Mammary epithelial cell (primary cell): ENCODE measurements at regions of chr1 and their contacts with region 1.

Region 1: DNA sequence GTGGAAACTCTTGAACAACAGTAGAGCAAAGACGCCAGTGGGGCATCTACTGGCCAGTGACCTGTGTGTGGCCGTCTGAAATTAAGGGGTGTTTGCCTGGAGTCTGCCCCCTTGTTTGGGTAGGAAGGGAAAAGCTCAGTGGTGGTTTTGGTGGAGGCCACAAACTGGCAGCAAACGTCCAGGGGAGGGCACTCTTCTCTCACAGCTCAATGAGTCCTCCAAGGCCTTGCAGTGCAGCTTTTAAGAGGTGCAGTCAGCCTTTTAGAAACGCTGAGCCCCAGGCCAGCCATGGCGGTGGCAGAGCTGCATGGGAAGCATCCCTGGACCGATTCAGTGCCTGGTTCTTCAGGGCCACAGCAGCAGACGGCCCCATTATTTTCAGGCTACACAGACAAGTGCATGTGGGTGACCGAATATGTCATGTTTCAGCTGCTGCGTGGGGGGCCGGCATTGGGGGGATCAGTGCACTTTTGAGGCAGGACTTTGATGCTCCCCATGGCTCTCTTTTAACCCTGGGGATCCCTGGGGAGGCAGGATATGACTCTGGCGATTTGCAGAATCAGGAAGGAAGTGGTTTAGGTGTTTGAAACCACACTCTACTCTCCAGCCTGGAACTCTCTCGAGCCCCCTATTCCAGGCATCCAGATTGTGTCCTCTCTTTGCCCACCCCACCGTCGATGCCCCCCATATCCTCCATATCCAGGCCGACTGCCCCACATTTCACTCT is 414.0 kb downstream of the PRDM2 start:
- DNase-seq: peak; percentile 52
- H3K4me3 ChIP-seq: no peak overlapping the region
- H3K27ac ChIP-seq: no peak overlapping the region
- H3K4me1 ChIP-seq: no peaks in the 10 kb centered on the region
- H3K27me3 ChIP-seq: no peaks in the 10 kb centered on the region
- CTCF ChIP-seq: peak; percentile 63 to 86

Region 2: DNA sequence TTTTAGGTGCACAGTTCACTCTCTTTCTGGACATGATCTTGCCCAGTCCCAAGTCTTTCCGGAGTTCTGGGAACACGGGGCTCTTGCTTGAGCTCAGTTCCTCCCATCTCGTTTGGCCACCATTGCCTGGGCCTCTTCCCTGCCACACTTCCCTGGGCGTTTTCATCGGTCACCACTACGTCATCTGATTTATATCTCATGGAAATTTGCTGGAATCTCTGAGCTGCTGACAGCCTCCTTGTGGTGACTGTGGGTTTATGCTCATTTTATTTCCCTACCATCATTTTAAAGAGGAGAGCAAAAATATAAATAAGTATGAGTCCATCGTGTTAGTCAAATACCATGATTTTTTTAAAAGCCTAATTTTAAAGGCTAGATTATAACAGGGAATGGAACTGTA is 35.4 kb after region 1 on chr1:
- CTCF ChIA-PET with region 1: no interaction called
- dilution Hi-C with region 1: no loop called
- in situ Hi-C with region 1: no loop called
- intact Hi-C with region 1: loop called (anchors 1 kb)
- DNase-seq: no peak
- H3K4me3 ChIP-seq: no peak overlapping the region
- H3K27ac ChIP-seq: no peak overlapping the region
- H3K4me1 ChIP-seq: no peaks in the 10 kb centered on the region
- H3K27me3 ChIP-seq: no peaks in the 10 kb centered on the region
- CTCF ChIP-seq: peak; percentile 23 to 27

Region 3: DNA sequence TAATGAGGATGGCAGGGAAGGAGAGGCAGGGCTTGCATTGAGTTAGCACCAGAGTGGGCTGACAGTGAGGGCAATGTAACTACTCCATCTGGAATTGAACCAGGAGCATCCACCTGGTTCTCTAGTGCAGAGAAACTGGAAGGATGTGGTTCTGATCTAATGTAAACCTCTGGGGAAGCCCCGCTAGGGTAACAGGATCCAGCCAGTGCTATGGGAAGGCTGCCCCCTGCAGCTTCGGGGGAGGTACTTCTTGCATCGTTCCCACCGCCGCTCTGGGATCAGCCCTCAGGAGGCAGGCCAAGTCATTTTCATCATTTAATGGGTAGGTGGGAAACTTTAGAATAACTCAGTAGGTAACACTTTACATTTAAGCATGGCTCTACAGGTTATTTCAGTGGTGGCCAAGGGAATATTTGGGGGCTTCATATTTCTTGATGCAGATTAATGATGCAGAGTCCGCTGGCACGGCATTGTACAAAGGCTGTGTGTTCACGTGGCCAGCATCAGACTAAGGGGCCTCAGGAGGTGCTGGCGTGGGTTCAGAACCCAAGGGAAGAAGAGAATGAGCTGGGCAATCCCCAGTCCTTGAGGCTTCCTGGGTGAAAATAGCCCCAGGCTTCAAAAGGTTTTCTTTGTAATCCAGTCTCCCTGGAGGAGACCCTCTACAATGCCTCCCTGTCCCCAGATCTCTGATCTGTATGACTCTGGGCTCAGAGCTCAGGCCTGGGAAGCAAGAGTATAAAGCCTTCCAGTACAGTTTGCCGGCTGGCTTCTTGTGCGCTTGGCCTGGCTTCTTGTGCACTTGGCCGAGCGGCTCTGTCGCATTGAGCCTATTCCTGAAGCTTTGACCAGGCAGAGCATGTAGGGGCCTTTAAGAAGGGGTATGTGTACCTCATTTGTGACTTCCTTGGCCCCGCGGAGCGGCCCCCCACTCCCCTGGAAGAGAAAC is 458.1 kb after region 1 on chr1:
- CTCF ChIA-PET with region 1: no interaction called
- dilution Hi-C with region 1: no loop called
- in situ Hi-C with region 1: loop called in 1 of 2 experiments (anchors 25 kb)
- intact Hi-C with region 1: no loop called
- DNase-seq: no peak
- H3K4me3 ChIP-seq: no peak overlapping the region
- H3K27ac ChIP-seq: no peak overlapping the region
- H3K4me1 ChIP-seq: no peaks in the 10 kb centered on the region
- H3K27me3 ChIP-seq: no peaks in the 10 kb centered on the region
- CTCF ChIP-seq: no peak

Region 4: GRCh38 chr1:14733048-14733778 is 619.2 kb after region 1 on chr1:
- CTCF ChIA-PET with region 1: no interaction called
- dilution Hi-C with region 1: no loop called
- in situ Hi-C with region 1: no loop called
- intact Hi-C with region 1: loop called (anchors 2 kb)
- DNase-seq: peak; percentile 96
- H3K4me3 ChIP-seq: peak overlapping the region; percentile 1 to 26 (median 9)
- H3K27ac ChIP-seq: peak overlapping the region; percentile 98
- H3K4me1 ChIP-seq: peaks cover 27% of the 10 kb centered on the region
- H3K27me3 ChIP-seq: no peaks in the 10 kb centered on the region
- CTCF ChIP-seq: no peak

Region 5: GRCh38 chr1:14804626-14805025 is 690.6 kb after region 1 on chr1:
- CTCF ChIA-PET with region 1: no interaction called
- dilution Hi-C with region 1: no loop called
- in situ Hi-C with region 1: no loop called
- intact Hi-C with region 1: loop called (anchors 5 kb)
- DNase-seq: no peak
- H3K4me3 ChIP-seq: no peak overlapping the region
- H3K27ac ChIP-seq: no peak overlapping the region
- H3K4me1 ChIP-seq: no peaks in the 10 kb centered on the region
- H3K27me3 ChIP-seq: no peaks in the 10 kb centered on the region
- CTCF ChIP-seq: peak; percentile 35 to 71

Region 6: GRCh38 chr1:14923727-14924452 is 809.9 kb after region 1 on chr1:
- CTCF ChIA-PET with region 1: no interaction called
- dilution Hi-C with region 1: no loop called
- in situ Hi-C with region 1: no loop called
- intact Hi-C with region 1: loop called (anchors 10 kb)
- DNase-seq: peak; percentile 53
- H3K4me3 ChIP-seq: peak overlapping the region in 2 of 3 experiments; percentile 81 to 82
- H3K27ac ChIP-seq: no peak overlapping the region
- H3K4me1 ChIP-seq: peaks cover 22% of the 10 kb centered on the region
- H3K27me3 ChIP-seq: no peaks in the 10 kb centered on the region
- CTCF ChIP-seq: no peak

Region 7: GRCh38 chr1:15046487-15047165 is 932.6 kb after region 1 on chr1:
- CTCF ChIA-PET with region 1: no interaction called
- dilution Hi-C with region 1: no loop called
- in situ Hi-C with region 1: loop called (anchors 25 kb)
- intact Hi-C with region 1: loop called (anchors 1 kb)
- DNase-seq: peak; percentile 67
- H3K4me3 ChIP-seq: no peak overlapping the region
- H3K27ac ChIP-seq: no peak overlapping the region
- H3K4me1 ChIP-seq: peaks cover 4% of the 10 kb centered on the region
- H3K27me3 ChIP-seq: no peaks in the 10 kb centered on the region
- CTCF ChIP-seq: peak; percentile 86 to 98